Activated CD8-positive, alpha-beta T cell treated with anti-CD3 and anti-CD28 coated beads for 36 hours (primary cell): ENCODE measurements at regions of chr16 and their contacts with region 1.

Region 1: GRCh38 chr16:1420111-1420540 is 421 bp downstream of the UQCC4 start:
- DNase-seq: peak; percentile 18
- ATAC-seq: no peak
- H3K4me3 Mint-ChIP-seq: peak overlapping the region; percentile 83
- H3K27ac Mint-ChIP-seq: peak overlapping the region; percentile 97
- H3K4me1 Mint-ChIP-seq: peaks cover 30% of the 10 kb centered on the region
- H3K27me3 Mint-ChIP-seq: no peaks in the 10 kb centered on the region
- CTCF ChIP-seq: no peak

Region 2: GRCh38 chr16:1492923-1493745 is 73.0 kb after region 1 on chr16 and contains the start of gene TELO2:
- CTCF ChIA-PET with region 1: no interaction called
- POLR2A ChIA-PET with region 1: interaction called, 14 read pairs
- intact Hi-C with region 1: no loop called
- DNase-seq: peak; percentile 85
- ATAC-seq: peak; percentile 93
- H3K4me3 Mint-ChIP-seq: peak within 1 kb of the TSS; percentile 93
- H3K27ac Mint-ChIP-seq: peak within 1 kb of the TSS; percentile 99
- H3K4me1 Mint-ChIP-seq: peaks cover 10% of the 10 kb centered on the region
- H3K27me3 Mint-ChIP-seq: no peaks in the 10 kb centered on the region
- CTCF ChIP-seq: no peak
- total RNA-seq, gene TELO2: 59.1 to 62.1 TPM

Region 3: GRCh38 chr16:1543085-1543896 is 123.2 kb after region 1 on chr16:
- CTCF ChIA-PET with region 1: interaction called, 3 read pairs
- POLR2A ChIA-PET with region 1: interaction called, 5 read pairs
- intact Hi-C with region 1: loop called (anchors 5 kb)
- DNase-seq: peak; percentile 90
- ATAC-seq: peak; percentile 88
- H3K4me3 Mint-ChIP-seq: peak overlapping the region; percentile 62
- H3K27ac Mint-ChIP-seq: peak overlapping the region; percentile 92
- H3K4me1 Mint-ChIP-seq: peaks cover 63% of the 10 kb centered on the region
- H3K27me3 Mint-ChIP-seq: no peaks in the 10 kb centered on the region
- CTCF ChIP-seq: no peak